ENCODE measurements at regions of chr18 and their contacts with region 1.

Region 1: DNA sequence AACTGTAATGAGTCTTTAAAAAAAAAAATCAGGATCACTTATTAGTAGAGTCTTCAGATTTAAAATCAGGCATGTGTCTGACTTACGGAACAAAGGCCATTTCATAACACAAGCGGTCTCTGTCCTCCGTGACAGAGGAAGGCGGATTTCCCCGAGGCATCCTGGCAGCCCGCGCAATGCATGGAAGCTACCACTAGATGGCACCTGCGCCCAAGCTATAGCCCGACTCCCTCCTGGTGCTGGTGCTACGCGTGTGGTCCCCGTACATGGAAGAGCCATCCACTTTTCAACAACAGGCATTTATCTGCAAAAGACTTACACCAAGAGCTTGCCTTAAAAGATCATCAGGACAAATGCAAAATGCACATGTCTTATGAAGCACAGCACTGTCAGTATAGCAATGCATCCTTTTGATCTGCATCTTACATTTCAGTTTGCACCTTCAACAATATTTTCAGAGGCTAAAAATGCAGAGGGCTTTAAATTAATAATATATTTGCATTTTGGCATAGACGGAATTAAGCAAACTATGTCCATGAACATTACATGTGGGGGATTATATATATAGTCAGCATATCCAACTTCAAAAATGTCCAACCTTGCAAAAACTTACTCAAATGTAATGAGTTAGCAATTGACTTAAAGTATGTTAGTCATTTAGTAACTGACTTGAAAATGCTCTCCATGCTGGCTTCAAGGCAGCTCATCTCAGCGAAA is 96.0 kb downstream of the ZNF516 start:
- DNase-seq: peak; percentile 78
- ATAC-seq: peak; percentile 92
- H3K4me3 ChIP-seq: no peak overlapping the region
- H3K4me3 Mint-ChIP-seq: no peak overlapping the region
- H3K27ac ChIP-seq: no peak overlapping the region
- H3K27ac Mint-ChIP-seq: no peak overlapping the region
- H3K4me1 ChIP-seq: no peaks in the 10 kb centered on the region
- H3K4me1 Mint-ChIP-seq: peaks cover 6% of the 10 kb centered on the region
- H3K27me3 ChIP-seq: no peaks in the 10 kb centered on the region
- H3K27me3 Mint-ChIP-seq: no peaks in the 10 kb centered on the region
- CTCF ChIP-seq: peak; percentile 97

Region 2: GRCh38 chr18:75592527-75592926 is 806.5 kb before region 1 on chr18:
- CTCF ChIA-PET with region 1: no interaction called
- POLR2A ChIA-PET with region 1: no interaction called
- intact Hi-C with region 1: no loop called
- DNase-seq: no peak
- ATAC-seq: no peak
- H3K4me3 ChIP-seq: no peak overlapping the region
- H3K4me3 Mint-ChIP-seq: no peak overlapping the region
- H3K27ac ChIP-seq: no peak overlapping the region
- H3K27ac Mint-ChIP-seq: no peak overlapping the region
- H3K4me1 ChIP-seq: no peaks in the 10 kb centered on the region
- H3K4me1 Mint-ChIP-seq: no peaks in the 10 kb centered on the region
- H3K27me3 ChIP-seq: no peaks in the 10 kb centered on the region
- H3K27me3 Mint-ChIP-seq: no peaks in the 10 kb centered on the region
- CTCF ChIP-seq: no peak

Region 3: DNA sequence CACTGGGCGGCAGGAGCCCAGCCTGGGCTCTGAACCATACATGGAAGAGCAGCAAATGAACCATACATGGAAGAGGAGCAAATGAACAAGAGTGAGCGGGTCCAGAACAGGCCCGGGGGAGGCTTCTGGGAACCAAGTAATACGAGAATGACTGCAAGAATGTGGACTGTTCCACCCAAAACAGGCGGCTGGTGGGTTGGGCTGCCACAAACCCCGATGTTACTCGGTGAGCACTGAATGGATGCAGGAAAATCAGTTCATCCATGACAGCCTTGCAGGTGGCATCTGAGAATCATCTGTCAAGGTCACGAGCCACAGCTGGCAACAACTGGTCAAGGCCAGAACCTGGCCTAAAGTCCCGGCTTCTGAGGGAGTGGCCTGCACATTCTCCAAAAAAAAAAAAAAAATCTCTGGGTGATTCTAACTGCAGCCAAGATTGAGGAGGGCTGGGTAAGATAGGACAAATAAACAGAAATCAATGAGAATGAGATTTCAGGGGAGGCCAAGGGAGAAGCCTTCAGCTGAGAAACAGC is 10.1 kb before region 1 on chr18:
- CTCF ChIA-PET with region 1: interaction called, 12 read pairs
- POLR2A ChIA-PET with region 1: no interaction called
- intact Hi-C with region 1: no loop called
- DNase-seq: no peak
- ATAC-seq: no peak
- H3K4me3 ChIP-seq: no peak overlapping the region
- H3K4me3 Mint-ChIP-seq: no peak overlapping the region
- H3K27ac ChIP-seq: no peak overlapping the region
- H3K27ac Mint-ChIP-seq: no peak overlapping the region
- H3K4me1 ChIP-seq: peaks cover 13 to 18% of the 10 kb centered on the region in 2 donors
- H3K4me1 Mint-ChIP-seq: peaks cover 38% of the 10 kb centered on the region
- H3K27me3 ChIP-seq: no peaks in the 10 kb centered on the region
- H3K27me3 Mint-ChIP-seq: no peaks in the 10 kb centered on the region
- CTCF ChIP-seq: no peak

Region 4: GRCh38 chr18:76416911-76417310 is 17.9 kb after region 1 on chr18:
- CTCF ChIA-PET with region 1: interaction called, 16 read pairs
- POLR2A ChIA-PET with region 1: no interaction called
- intact Hi-C with region 1: no loop called
- DNase-seq: no peak
- ATAC-seq: no peak
- H3K4me3 ChIP-seq: no peak overlapping the region
- H3K4me3 Mint-ChIP-seq: no peak overlapping the region
- H3K27ac ChIP-seq: no peak overlapping the region
- H3K27ac Mint-ChIP-seq: no peak overlapping the region
- H3K4me1 ChIP-seq: no peaks in the 10 kb centered on the region
- H3K4me1 Mint-ChIP-seq: no peaks in the 10 kb centered on the region
- H3K27me3 ChIP-seq: no peaks in the 10 kb centered on the region
- H3K27me3 Mint-ChIP-seq: no peaks in the 10 kb centered on the region
- CTCF ChIP-seq: no peak

Region 5: DNA sequence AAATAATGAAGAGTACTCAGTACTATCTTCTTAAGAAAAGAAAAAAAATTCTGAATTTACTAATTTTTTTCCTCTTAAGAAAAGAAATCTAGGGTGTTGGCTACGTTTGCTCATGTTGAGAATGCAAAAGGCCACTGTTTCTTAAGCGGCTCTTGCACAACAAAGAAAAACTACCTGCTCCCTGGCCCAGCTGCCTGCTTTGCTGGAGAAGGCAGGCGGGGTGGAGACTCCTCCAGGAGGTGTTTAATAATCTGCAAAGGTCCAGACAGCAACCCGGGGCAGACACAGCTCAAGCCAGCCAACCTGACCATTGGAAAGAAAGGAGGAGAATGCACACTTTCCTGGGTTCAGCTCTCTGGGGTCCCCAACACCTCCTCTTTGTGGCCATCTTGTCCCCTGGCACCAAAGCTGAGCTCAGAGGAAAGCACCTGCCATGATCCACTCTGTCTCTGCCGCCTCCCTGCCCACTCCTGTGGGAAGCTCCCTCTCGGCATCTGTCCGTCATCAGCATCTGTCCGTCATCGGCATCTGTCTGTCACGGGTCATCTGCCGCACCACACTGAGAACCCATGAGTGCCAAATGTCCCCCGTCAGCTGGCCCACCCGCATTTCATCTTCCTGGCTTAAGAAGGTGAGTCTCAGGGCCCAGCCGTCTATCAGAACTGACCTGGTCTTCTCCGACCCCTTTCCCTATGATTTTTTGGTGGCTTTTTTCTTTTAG is 84.1 kb after region 1 on chr18:
- CTCF ChIA-PET with region 1: no interaction called
- POLR2A ChIA-PET with region 1: no interaction called
- intact Hi-C with region 1: no loop called
- DNase-seq: no peak
- ATAC-seq: no peak
- H3K4me3 ChIP-seq: no peak overlapping the region
- H3K4me3 Mint-ChIP-seq: no peak overlapping the region
- H3K27ac ChIP-seq: no peak overlapping the region
- H3K27ac Mint-ChIP-seq: no peak overlapping the region
- H3K4me1 ChIP-seq: peaks cover 9 to 10% of the 10 kb centered on the region in 2 donors
- H3K4me1 Mint-ChIP-seq: peaks cover 26% of the 10 kb centered on the region
- H3K27me3 ChIP-seq: no peaks in the 10 kb centered on the region
- H3K27me3 Mint-ChIP-seq: no peaks in the 10 kb centered on the region
- CTCF ChIP-seq: no peak

Region 6: DNA sequence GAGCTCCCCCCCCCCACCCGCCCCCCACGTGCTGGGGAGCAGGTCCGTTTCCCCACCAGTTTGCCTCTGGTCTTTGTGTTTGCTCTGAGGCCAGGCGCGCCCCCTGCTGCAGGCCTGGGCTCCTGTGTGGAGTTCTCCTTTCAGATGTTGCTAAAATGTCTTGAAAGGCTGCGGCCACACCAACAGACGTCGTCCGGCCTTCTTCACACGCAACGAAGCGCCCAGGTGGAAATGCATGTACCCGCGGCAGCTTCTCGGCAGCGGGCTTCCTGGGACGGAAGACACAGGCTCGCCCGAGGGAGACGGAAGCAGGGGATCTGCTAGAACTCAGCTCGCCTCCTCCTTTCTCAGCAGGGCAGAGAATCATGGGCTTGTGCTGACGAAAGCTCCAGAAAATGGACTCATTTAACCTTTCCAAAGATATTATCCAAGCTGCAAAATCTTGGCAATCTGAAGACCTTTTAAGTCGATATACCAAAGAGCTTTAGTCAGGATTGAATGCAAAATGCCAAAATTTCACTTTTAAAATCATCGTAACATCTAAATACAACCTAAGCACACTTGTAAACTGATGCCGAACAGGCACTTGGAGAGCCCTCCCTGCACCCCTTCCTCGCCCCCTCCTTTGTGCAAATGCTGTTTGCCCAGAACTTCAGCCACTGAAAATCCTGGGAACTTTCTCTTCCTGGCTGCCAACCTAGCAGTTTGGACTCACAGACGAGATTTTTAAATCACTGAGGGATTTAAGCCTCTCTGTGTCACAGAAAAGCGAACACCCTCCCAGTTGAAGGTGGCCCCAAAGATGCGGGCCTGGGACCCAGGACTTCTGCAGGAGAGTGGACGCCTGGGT is 221.5 kb after region 1 on chr18:
- CTCF ChIA-PET with region 1: interaction called, 78 read pairs
- POLR2A ChIA-PET with region 1: no interaction called
- intact Hi-C with region 1: no loop called
- DNase-seq: peak; percentile 55
- ATAC-seq: peak; percentile 51
- H3K4me3 ChIP-seq: no peak overlapping the region
- H3K4me3 Mint-ChIP-seq: no peak overlapping the region
- H3K27ac ChIP-seq: no peak overlapping the region
- H3K27ac Mint-ChIP-seq: no peak overlapping the region
- H3K4me1 ChIP-seq: peaks cover 0 to 5% of the 10 kb centered on the region in 2 donors
- H3K4me1 Mint-ChIP-seq: peaks cover 5% of the 10 kb centered on the region
- H3K27me3 ChIP-seq: peaks cover 0 to 16% (median 3%) of the 10 kb centered on the region in 4 experiments
- H3K27me3 Mint-ChIP-seq: peaks cover 43% of the 10 kb centered on the region
- CTCF ChIP-seq: peak; percentile 50

Region 7: GRCh38 chr18:76709659-76710645 is 310.9 kb after region 1 on chr18:
- CTCF ChIA-PET with region 1: interaction called, 241 read pairs
- POLR2A ChIA-PET with region 1: no interaction called
- intact Hi-C with region 1: loop called (anchors 1 kb)
- DNase-seq: peak; percentile 68
- ATAC-seq: peak; percentile 67
- H3K4me3 ChIP-seq: no peak overlapping the region
- H3K4me3 Mint-ChIP-seq: no peak overlapping the region
- H3K27ac ChIP-seq: no peak overlapping the region
- H3K27ac Mint-ChIP-seq: no peak overlapping the region
- H3K4me1 ChIP-seq: peaks cover 0 to 3% of the 10 kb centered on the region in 2 donors
- H3K4me1 Mint-ChIP-seq: no peaks in the 10 kb centered on the region
- H3K27me3 ChIP-seq: no peaks in the 10 kb centered on the region
- H3K27me3 Mint-ChIP-seq: no peaks in the 10 kb centered on the region
- CTCF ChIP-seq: peak; percentile 97